HAP-1 (cell line): ENCODE measurements at regions of chr20 and their contacts with region 1.

Region 1: GRCh38 chr20:50460460-50461267 is 49.5 kb upstream of the PTPN1 start:
- DNase-seq: peak; percentile 37 to 92
- H3K4me3 ChIP-seq: no peak overlapping the region
- H3K4me1 ChIP-seq: peaks cover 6% of the 10 kb centered on the region
- H3K27me3 ChIP-seq: no peaks in the 10 kb centered on the region

Region 2: DNA sequence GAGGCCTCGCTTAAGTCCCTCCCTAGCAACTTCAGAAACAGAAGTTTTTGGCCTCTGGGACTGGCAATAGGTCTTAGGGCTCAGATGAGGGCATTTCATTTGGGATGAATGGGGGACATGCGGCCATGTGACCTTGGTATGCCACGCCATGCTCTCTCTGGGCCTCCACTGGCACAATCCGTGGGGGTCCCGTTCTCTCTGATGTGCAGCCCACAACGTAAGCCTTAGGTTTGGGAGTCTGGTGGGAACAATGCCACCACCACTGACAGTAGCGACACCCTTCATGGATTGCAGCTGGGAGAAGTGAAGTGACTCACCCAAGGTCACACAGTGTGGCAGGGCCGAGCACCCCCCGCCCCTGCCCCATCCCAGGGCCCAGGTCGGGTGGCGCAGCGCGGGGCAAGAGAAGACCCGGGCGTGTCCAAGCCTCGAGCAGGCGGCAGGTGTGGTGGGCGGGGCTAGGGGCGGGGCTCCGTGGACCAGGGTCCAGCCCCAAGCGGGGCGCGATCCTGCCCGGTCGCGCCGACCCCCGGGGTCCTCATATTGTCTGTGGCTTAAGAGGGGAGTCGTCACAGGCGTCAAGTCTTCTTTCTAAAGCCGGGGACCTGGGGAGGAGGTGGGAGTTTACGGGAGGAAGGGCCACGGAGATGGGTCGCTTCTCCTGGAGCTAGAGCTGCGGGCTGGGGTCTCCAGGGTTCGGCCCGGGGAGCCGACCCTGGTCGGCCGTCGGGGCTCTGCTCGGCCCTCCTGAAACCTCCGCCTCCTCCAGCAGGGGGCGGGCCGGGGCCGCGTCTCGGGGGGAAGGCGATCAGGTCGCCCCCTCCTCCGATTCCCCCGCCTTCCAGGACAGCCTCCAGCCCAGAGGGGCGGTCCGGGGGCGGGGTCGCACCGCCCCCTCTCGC is 270.7 kb before region 1 on chr20:
- in situ Hi-C with region 1: loop called (anchors 5 kb)
- DNase-seq: peak; percentile 74 to 93
- H3K4me3 ChIP-seq: peak overlapping the region; percentile 76
- H3K4me1 ChIP-seq: peaks cover 11% of the 10 kb centered on the region
- H3K27me3 ChIP-seq: no peaks in the 10 kb centered on the region

Region 3: DNA sequence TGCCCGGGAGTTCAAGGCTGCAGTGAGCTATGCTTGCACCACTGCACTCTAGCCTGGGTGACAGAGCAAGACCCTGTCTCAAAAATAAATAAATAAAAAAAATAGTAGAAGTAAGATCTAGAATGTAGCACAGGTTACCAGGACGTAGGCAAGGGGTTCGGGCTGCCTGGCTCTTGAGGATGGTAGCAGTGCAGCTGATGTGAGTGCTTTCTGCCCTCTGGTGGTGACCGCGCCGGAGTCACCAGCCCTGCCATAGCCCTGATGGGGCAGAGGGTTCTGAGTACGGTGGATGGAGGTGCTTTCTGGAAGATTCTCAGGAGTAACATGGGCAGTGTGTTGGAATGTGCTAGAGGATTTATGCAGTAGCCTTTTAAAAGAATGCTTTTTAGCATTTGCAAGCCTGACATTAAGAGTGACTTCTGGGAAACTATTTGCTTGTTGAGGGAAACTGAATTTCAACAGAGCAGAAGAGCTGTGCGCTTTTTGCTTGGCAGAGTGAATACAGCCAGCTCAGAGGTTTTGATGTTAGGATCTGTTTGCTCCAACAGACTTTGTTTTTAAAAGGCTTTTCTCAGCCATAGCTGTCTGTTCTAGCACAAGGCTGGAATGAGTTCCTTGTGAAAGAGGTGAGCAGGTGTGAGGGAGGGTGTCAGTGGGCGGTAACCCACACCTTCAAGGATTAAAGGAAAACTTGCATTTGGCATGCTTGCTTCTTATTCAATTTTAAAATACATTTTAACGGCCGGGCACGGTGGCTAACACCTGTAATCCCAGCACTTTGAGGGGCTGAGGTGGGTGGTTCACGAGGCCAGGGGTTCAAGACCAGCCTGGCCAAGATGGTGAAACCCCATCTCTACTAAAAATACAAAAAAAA is 115.4 kb after region 1 on chr20:
- in situ Hi-C with region 1: loop called (anchors 5 kb)
- DNase-seq: peak; percentile 26 to 74
- H3K4me3 ChIP-seq: no peak overlapping the region
- H3K4me1 ChIP-seq: no peaks in the 10 kb centered on the region
- H3K27me3 ChIP-seq: no peaks in the 10 kb centered on the region